ENCODE measurements at regions of chr21 and their contacts with region 1.

Region 1: DNA sequence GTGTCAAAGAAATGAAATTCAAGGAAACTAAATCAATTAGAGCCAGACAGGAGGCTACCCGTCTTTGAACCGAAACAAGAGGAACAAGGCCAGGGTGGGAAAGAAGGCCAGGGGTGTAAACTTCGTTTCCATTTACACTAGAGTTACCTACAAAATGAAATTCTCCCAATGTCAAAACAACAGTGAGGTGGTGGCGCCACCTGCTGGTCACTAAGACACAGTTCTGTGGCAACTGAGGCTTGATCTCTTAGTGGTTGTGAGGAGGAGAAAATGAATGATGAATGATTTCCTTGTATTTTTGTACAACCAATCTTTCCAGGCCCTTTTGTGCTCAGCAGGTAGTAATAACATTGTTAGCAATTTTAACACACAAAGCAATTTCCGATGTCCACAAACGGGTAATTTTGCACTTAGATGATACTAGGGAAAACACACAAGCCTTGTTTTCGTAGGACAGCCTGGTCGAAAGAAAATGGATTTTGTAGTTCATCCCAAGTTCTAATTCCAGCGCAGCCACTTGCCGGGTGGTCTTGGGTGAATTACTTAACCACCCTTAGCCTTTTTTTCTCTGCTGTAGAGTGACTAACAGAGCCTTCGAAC is 54.8 kb upstream of the SOD1 start:
- DNase-seq: peak; percentile 46 to 54
- H3K4me3 ChIP-seq: no peak overlapping the region
- H3K4me3 Mint-ChIP-seq: no peak overlapping the region
- H3K27ac Mint-ChIP-seq: no peak overlapping the region
- H3K4me1 ChIP-seq: no peaks in the 10 kb centered on the region
- H3K4me1 Mint-ChIP-seq: no peaks in the 10 kb centered on the region
- H3K27me3 ChIP-seq: no peaks in the 10 kb centered on the region
- H3K27me3 Mint-ChIP-seq: no peaks in the 10 kb centered on the region
- CTCF ChIP-seq: peak; percentile 71 to 83

Region 2: GRCh38 chr21:31098576-31099005 is 506.1 kb before region 1 on chr21:
- CTCF ChIA-PET with region 1: no interaction called
- POLR2A ChIA-PET with region 1: no interaction called
- intact Hi-C with region 1: loop called (anchors 1 kb)
- DNase-seq: peak; percentile 60 to 67
- H3K4me3 ChIP-seq: no peak overlapping the region
- H3K4me3 Mint-ChIP-seq: no peak overlapping the region
- H3K27ac Mint-ChIP-seq: no peak overlapping the region
- H3K4me1 ChIP-seq: 0 out of 2 replicates have a peak, but pooled peaks cover 5% of the 10 kb centered on the region
- H3K4me1 Mint-ChIP-seq: no peaks in the 10 kb centered on the region
- H3K27me3 ChIP-seq: no peaks in the 10 kb centered on the region; the same call in 1 of the 2 replicates
- H3K27me3 Mint-ChIP-seq: peaks cover 9% of the 10 kb centered on the region
- CTCF ChIP-seq: peak; percentile 79 to 86

Region 3: GRCh38 chr21:31347435-31348032 is 257.2 kb before region 1 on chr21:
- CTCF ChIA-PET with region 1: no interaction called
- POLR2A ChIA-PET with region 1: no interaction called
- intact Hi-C with region 1: loop called (anchors 1 kb)
- DNase-seq: peak in 1 of 2 experiments; percentile 32
- H3K4me3 ChIP-seq: no peak overlapping the region
- H3K4me3 Mint-ChIP-seq: peak overlapping the region; percentile 44
- H3K27ac Mint-ChIP-seq: no peak overlapping the region
- H3K4me1 ChIP-seq: no peaks in the 10 kb centered on the region
- H3K4me1 Mint-ChIP-seq: peaks cover 9% of the 10 kb centered on the region
- H3K27me3 ChIP-seq: no peaks in the 10 kb centered on the region
- H3K27me3 Mint-ChIP-seq: no peaks in the 10 kb centered on the region
- CTCF ChIP-seq: peak; percentile 55 to 58